ENCODE measurements at regions of chr9 and their contacts with region 1.

Region 1: DNA sequence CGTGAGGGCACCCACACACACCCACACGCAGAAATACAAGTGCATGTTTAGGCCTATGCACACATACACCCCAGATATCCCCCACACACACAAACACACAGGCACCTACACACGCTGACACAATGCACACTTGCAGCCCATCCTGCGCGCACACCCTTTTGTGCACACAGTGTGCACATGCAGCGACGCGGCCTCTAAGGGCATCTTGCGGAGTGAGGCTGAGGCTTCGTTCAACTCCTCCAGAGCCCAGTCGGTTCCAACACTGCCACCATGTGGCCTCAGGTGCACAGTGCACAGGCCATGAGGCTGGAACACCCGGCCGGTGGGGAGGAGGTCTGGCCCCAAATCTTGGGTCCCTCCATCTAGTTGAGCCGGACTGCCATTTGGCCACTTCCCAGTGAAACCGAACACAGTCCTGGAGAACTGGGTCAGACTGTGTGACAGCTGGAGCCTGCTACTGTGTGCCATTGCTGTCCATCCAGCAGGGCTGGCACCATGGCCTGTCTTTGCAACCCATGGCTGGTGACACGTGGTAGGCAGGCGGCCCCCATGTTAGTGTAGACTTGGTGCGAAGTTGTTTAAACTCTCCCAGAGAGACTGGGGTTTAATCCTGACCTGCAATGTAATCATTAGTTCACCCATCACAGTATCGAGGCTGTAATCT is 97.7 kb upstream of the MVB12B start:
- DNase-seq: peak; percentile 55
- H3K4me3 ChIP-seq: no peak overlapping the region
- H3K27ac ChIP-seq: no peak overlapping the region
- H3K4me1 ChIP-seq: no peaks in the 10 kb centered on the region
- CTCF ChIP-seq: peak; percentile 88

Region 2: DNA sequence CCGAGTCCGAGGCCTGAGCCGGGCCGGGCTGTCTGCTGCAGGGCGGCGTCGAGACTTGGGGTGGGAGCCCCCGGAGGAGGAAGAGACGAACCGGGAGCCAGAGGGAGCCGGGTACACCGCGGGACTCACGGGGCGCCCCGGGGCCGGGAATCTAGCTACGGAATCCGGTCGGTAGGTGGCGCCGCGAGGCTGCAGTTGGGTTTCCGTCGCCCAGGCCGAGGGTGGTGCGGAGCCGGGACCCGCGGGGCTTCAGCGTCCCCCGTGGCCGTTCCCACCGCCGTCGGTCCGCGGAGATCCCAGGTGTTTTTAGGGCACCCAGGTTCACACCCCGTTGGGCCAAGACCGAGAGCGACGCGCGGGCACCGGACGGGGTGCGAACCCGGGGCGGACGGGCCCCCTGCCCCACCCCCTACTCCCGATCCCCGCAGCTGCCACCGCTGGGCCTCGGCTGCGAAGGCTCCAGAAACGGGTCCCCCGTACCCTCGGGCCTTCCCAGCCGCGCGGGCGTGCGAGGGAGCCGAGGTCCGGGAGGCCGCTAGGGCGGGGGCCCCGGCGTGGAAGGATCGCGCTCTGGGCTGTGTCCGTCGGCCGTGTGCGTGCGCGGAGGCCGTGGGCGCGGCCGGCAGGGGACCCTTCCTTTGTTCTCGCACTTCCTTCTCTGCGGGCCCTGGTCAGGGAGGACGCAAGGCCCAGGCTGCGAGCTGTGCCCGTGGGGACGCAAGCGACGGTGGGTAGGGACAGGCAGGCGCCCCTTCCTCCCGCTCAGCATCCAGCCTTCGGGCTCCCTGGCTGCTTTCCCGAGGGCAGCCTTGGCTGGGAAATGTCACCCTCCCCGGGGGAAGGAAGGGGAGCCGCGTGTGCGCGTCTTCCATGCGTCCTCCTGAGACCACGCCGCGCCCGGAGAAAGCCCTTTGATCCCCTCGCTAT is 820.7 kb before region 1 on chr9:
- CTCF ChIA-PET with region 1: no interaction called
- POLR2A ChIA-PET with region 1: no interaction called
- intact Hi-C with region 1: loop called (anchors 2 kb)
- DNase-seq: peak; percentile 84
- H3K4me3 ChIP-seq: peak overlapping the region; percentile 60
- H3K27ac ChIP-seq: no peak overlapping the region
- H3K4me1 ChIP-seq: peaks cover 21% of the 10 kb centered on the region
- CTCF ChIP-seq: peak; percentile 83

Region 3: DNA sequence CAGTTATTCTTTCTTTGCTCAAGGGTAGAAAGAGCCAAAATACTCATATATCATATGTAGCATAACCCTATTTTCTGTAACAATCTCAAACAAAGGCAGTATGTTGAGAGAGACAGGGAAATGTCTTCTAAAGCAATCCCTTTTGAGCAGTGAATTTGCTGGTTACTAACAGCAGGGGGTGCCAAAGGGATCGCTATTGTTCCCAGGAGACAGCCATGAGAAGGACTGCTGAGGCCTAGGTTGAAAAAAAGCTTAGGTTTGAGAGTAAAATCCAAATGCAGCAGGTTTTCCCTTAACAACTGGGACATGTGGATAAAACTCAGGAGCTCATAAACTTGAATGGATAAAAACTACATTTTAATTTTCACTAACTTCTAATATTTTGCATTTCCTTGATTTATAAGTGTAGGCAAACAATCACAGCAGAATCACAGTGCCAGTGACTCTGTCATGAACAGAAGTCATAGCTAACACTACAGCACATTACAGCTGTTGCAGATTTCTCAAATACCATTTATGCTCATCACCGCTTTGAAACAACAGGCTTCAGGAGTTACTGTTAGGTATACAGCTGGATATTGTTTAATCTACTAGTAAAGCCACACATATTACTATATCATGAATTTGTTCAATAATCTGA is 670.3 kb before region 1 on chr9:
- CTCF ChIA-PET with region 1: no interaction called
- POLR2A ChIA-PET with region 1: no interaction called
- intact Hi-C with region 1: loop called (anchors 10 kb)
- DNase-seq: peak; percentile 72
- H3K4me3 ChIP-seq: no peak overlapping the region
- H3K27ac ChIP-seq: no peak overlapping the region
- H3K4me1 ChIP-seq: peaks cover 9% of the 10 kb centered on the region
- CTCF ChIP-seq: peak; percentile 95

Region 4: GRCh38 chr9:125911861-125912644 is 316.9 kb before region 1 on chr9:
- CTCF ChIA-PET with region 1: no interaction called
- POLR2A ChIA-PET with region 1: no interaction called
- intact Hi-C with region 1: no loop called
- DNase-seq: no peak
- H3K4me3 ChIP-seq: no peak overlapping the region
- H3K27ac ChIP-seq: no peak overlapping the region
- H3K4me1 ChIP-seq: no peaks in the 10 kb centered on the region
- CTCF ChIP-seq: no peak

Region 5: DNA sequence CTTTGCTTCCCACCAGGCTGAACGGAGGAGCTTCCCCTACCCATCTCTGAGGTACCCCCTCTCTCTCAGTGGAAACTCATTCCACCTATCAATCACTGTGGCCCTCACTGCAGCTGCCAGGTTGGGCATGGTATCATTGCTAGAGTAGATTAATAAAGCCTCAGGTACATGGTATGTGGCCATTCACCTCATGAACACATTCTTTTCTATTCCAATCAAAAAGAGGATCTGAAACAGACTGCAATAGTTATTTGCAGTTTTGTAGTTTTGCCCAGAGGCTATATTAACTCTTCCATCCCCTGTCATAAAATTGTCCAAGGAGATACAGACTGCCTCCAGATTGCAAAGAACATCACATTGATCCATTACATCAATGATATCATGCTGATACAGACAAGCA is 11.9 kb after region 1 on chr9:
- CTCF ChIA-PET with region 1: no interaction called
- POLR2A ChIA-PET with region 1: no interaction called
- intact Hi-C with region 1: no loop called
- DNase-seq: peak; percentile 10
- H3K4me3 ChIP-seq: no peak overlapping the region
- H3K27ac ChIP-seq: no peak overlapping the region
- H3K4me1 ChIP-seq: peaks cover 9% of the 10 kb centered on the region
- CTCF ChIP-seq: no peak

Region 6: GRCh38 chr9:126885131-126885641 is 656.3 kb after region 1 on chr9:
- CTCF ChIA-PET with region 1: no interaction called
- POLR2A ChIA-PET with region 1: no interaction called
- intact Hi-C with region 1: no loop called
- DNase-seq: no peak
- H3K4me3 ChIP-seq: no peak overlapping the region
- H3K27ac ChIP-seq: no peak overlapping the region
- H3K4me1 ChIP-seq: no peaks in the 10 kb centered on the region
- CTCF ChIP-seq: no peak